PC-3 (cell line): ENCODE measurements at regions of chr1 and their contacts with region 1.

Region 1: GRCh38 chr1:53473463-53473862 is 14.3 kb downstream of the DMRTB1 start:
- DNase-seq: peak; percentile 14
- ATAC-seq: 0 out of 2 replicates have a peak, but pooled peaks have one; percentile 35
- H3K4me3 ChIP-seq: no peak overlapping the region
- H3K27ac ChIP-seq: no peak overlapping the region
- H3K4me1 ChIP-seq: no peaks in the 10 kb centered on the region
- H3K27me3 ChIP-seq: peaks cover 26% of the 10 kb centered on the region
- CTCF ChIP-seq: peak; percentile 44

Region 2: GRCh38 chr1:53442299-53442698 is 31.2 kb before region 1 on chr1:
- CTCF ChIA-PET with region 1: no interaction called
- POLR2A ChIA-PET with region 1: no interaction called
- intact Hi-C with region 1: loop called (anchors 1 kb)
- DNase-seq: peak; percentile 20
- ATAC-seq: no peak; the same call in 1 of the 2 replicates
- H3K4me3 ChIP-seq: no peak overlapping the region
- H3K27ac ChIP-seq: no peak overlapping the region
- H3K4me1 ChIP-seq: no peaks in the 10 kb centered on the region
- H3K27me3 ChIP-seq: no peaks in the 10 kb centered on the region
- CTCF ChIP-seq: no peak